CD14-positive monocyte (primary cell): ENCODE measurements at regions of chr12 and their contacts with region 1.

Region 1: GRCh38 chr12:121678716-121679580 is 9.5 kb upstream of the MORN3 start:
- DNase-seq: no peak
- H3K4me3 ChIP-seq: no peak overlapping the region
- H3K4me3 Mint-ChIP-seq: no peak overlapping the region
- H3K27ac ChIP-seq: no peak overlapping the region
- H3K27ac Mint-ChIP-seq: no peak overlapping the region
- H3K4me1 ChIP-seq: peaks cover 3% of the 10 kb centered on the region in 2 donors
- H3K4me1 Mint-ChIP-seq: peaks cover 6% of the 10 kb centered on the region
- H3K27me3 ChIP-seq: no peaks in the 10 kb centered on the region
- H3K27me3 Mint-ChIP-seq: peaks cover 0 to 3% (median 0%) of the 10 kb centered on the region in 3 donors
- CTCF ChIP-seq: no peak

Region 2: GRCh38 chr12:121499929-121500793 is 178.8 kb before region 1 on chr12:
- intact Hi-C with region 1: loop called (anchors 2 to 5 kb)
- DNase-seq: peak; percentile 53 to 63 (median 55)
- H3K4me3 ChIP-seq: no peak overlapping the region
- H3K4me3 Mint-ChIP-seq: no peak overlapping the region
- H3K27ac ChIP-seq: no peak overlapping the region
- H3K27ac Mint-ChIP-seq: peak overlapping the region in 2 of 7 donors; percentile 41 to 46
- H3K4me1 ChIP-seq: peaks cover 6 to 8% of the 10 kb centered on the region in 2 donors
- H3K4me1 Mint-ChIP-seq: peaks cover 8% of the 10 kb centered on the region
- H3K27me3 ChIP-seq: no peaks in the 10 kb centered on the region
- H3K27me3 Mint-ChIP-seq: peaks cover 0 to 3% (median 2%) of the 10 kb centered on the region in 3 donors
- CTCF ChIP-seq: peak; percentile 97

Region 3: GRCh38 chr12:121874071-121874470 is 195.1 kb after region 1 on chr12:
- intact Hi-C with region 1: no loop called
- DNase-seq: peak in 1 of 3 donors; percentile 30
- H3K4me3 ChIP-seq: no peak overlapping the region
- H3K4me3 Mint-ChIP-seq: peak overlapping the region in 1 of 2 donors; percentile 70
- H3K27ac ChIP-seq: peak overlapping the region; percentile 41 to 56
- H3K27ac Mint-ChIP-seq: peak overlapping the region; percentile 71 to 93 (median 84)
- H3K4me1 ChIP-seq: peaks cover 50 to 57% of the 10 kb centered on the region in 2 donors
- H3K4me1 Mint-ChIP-seq: peaks cover 41% of the 10 kb centered on the region
- H3K27me3 ChIP-seq: no peaks in the 10 kb centered on the region
- H3K27me3 Mint-ChIP-seq: no peaks in the 10 kb centered on the region
- CTCF ChIP-seq: no peak